Activated CD8-positive, alpha-beta memory T cell treated with anti-CD3 and anti-CD28 coated beads, Interleukin-2, amount 10 ng/mL, durations not matched to agents 7 days and 5 days (primary cell): ENCODE measurements at regions of chr6 and their contacts with region 1.

Region 1: DNA sequence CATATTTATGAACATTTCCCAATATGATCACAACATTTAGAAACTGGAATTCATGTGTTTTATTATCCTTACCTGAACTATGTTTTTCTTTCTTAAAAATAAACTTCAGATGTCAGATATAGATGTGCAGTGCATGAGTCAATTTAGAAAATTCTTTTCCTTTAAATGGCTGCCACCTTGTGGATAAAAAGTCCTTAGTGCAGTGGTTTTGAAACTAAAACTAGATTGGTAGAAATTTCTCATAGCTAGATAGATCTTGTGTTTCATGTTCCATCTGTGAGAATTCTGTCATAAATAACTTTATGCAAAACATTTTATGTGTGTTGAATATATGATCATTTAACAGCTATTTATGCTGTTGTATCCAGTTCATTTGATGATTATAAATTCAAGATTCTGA is 134.9 kb downstream of the KLHL32 start:
- DNase-seq: no peak
- ATAC-seq: peak; percentile 68
- H3K4me3 Mint-ChIP-seq: no peak overlapping the region
- H3K27ac Mint-ChIP-seq: no peak overlapping the region
- H3K4me1 Mint-ChIP-seq: no peaks in the 10 kb centered on the region
- H3K27me3 Mint-ChIP-seq: no peaks in the 10 kb centered on the region

Region 2: DNA sequence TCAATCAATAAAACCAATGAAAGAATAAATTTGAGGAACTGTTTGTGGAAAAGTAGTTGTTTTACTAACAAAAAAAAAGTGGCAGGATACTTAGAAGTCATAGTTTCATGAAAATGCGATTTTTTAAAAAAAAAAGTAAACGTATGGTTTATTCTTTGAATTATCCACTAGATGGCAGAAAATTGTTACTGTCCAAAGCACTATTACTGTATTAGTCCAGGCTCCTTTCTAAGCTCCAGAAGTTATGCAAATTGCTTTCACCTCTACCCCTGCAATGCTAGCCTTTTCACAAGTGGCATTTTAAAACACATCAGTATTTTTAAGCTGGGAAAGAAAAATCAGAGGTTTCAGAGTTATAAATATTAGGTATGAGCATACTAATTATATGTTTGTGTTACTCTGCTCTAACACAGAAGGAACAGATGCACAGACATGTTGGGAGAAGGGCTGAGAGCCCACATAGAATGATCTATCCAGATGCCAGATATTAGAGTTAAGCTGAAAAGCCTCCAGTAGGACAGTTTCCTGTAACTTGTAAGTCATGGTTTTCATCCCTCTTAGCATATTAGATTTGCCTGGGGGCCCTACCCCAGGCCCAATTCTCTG is 432.6 kb before region 1 on chr6:
- CTCF ChIA-PET with region 1: interaction called, 13 read pairs
- DNase-seq: no peak
- ATAC-seq: peak; percentile 63
- H3K4me3 Mint-ChIP-seq: no peak overlapping the region
- H3K27ac Mint-ChIP-seq: no peak overlapping the region
- H3K4me1 Mint-ChIP-seq: peaks cover 5% of the 10 kb centered on the region
- H3K27me3 Mint-ChIP-seq: peaks cover 28% of the 10 kb centered on the region